Activated naive CD4-positive, alpha-beta T cell treated with anti-CD3 and anti-CD28 coated beads for 36 hours (primary cell): ENCODE measurements at regions of chr19 and their contacts with region 1.

Region 1: GRCh38 chr19:41563854-41564514 is 12.0 kb upstream of the CEACAM21 start:
- DNase-seq: peak; percentile 80
- H3K4me3 Mint-ChIP-seq: peak overlapping the region; percentile 84
- H3K27ac Mint-ChIP-seq: peak overlapping the region; percentile 35
- H3K4me1 Mint-ChIP-seq: peaks cover 76% of the 10 kb centered on the region
- H3K27me3 Mint-ChIP-seq: no peaks in the 10 kb centered on the region

Region 2: GRCh38 chr19:41449079-41449864 is 114.7 kb before region 1 on chr19:
- CTCF ChIA-PET with region 1: interaction called, 185 read pairs
- intact Hi-C with region 1: loop called (anchors 1 kb)
- DNase-seq: peak; percentile 84
- H3K4me3 Mint-ChIP-seq: peak overlapping the region; percentile 77
- H3K27ac Mint-ChIP-seq: peak overlapping the region; percentile 56
- H3K4me1 Mint-ChIP-seq: peaks cover 11% of the 10 kb centered on the region
- H3K27me3 Mint-ChIP-seq: no peaks in the 10 kb centered on the region

Region 3: DNA sequence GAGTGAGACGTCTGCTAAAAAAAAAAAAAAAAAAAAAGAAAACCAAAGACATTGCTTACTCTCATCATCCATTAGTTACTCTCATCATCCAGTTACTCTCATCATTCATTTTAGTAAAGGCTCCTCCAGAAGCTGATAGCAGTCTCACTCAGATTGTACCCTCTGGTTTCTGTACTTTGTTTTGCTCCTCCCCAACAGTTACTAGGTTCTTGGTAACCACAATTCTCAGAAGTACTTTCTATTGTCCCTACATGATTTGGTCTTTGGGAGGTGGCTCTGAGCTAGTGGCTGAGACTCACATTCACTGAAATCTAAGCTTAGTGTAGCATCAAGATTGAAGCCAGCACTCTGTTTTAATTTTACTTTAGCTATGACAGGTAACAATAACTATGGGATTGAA is 106.7 kb before region 1 on chr19:
- CTCF ChIA-PET with region 1: interaction called, 185 read pairs
- intact Hi-C with region 1: no loop called
- DNase-seq: no peak
- H3K4me3 Mint-ChIP-seq: no peak overlapping the region
- H3K27ac Mint-ChIP-seq: no peak overlapping the region
- H3K4me1 Mint-ChIP-seq: peaks cover 15% of the 10 kb centered on the region
- H3K27me3 Mint-ChIP-seq: no peaks in the 10 kb centered on the region

Region 4: DNA sequence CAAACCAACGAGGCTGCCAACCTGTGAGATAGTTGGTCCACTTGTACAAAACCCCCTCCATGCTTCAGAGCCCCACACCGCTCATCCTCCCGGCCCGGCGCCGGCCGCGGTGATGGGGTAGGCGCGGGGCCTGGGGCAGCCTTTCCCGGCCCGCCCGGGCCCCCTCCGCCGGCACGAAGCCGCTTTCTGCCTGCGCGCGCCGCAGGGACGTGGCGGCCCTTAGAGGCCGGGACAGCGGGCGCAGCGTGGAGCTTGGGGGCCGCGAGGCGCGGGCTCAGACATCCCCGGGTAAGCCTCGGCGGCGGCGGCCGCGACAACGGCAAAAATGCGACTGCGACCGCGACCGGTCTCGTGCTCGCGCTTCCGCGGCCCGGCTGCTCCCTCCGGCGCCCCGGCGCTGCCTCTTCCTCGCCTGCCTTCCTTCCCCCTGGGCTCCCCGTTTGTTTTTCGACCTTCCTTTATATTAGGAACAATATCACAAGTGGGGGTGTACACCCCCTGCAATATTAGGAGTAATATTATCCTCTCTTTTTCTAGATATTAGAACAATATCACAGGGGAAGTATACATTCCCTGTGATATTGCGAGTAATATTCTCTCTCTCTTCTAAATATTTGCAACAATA is 41.9 kb before region 1 on chr19:
- CTCF ChIA-PET with region 1: interaction called, 6 read pairs
- intact Hi-C with region 1: loop called (anchors 1 kb)
- DNase-seq: peak; percentile 39
- H3K4me3 Mint-ChIP-seq: peak overlapping the region; percentile 76
- H3K27ac Mint-ChIP-seq: peak overlapping the region; percentile 81
- H3K4me1 Mint-ChIP-seq: peaks cover 24% of the 10 kb centered on the region
- H3K27me3 Mint-ChIP-seq: no peaks in the 10 kb centered on the region

Region 5: GRCh38 chr19:41531438-41532311 is 32.3 kb before region 1 on chr19:
- CTCF ChIA-PET with region 1: interaction called, 171 read pairs
- intact Hi-C with region 1: no loop called
- DNase-seq: peak; percentile 95
- H3K4me3 Mint-ChIP-seq: peak overlapping the region; percentile 78
- H3K27ac Mint-ChIP-seq: peak overlapping the region; percentile 90
- H3K4me1 Mint-ChIP-seq: peaks cover 52% of the 10 kb centered on the region
- H3K27me3 Mint-ChIP-seq: no peaks in the 10 kb centered on the region

Region 6: DNA sequence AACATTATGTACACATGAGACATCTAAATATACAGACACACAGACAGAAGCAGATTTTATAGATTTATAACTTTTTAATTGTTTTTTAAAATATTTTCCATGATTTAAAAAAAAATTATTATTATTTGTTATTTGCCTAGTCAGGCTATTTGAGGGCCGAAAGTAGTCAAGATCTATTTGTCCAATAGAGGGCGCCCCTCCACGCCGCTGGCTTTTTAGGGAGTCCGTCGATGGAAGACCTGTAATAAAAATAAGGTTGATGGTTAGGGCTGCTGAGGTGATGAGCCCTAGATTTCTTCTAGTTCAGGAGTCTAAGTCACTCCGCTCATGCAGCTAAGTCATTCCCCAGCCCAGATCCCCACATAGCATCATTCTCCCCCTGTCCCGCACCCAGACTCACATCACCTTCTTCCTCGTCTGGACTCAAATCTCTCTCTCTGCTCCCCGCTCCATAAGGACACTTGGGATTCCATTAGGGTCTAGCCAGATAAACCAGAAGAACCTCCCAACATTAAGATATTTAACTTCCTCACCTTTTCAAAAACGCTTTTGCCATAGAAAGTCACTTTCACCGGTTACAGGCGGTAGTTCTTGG is 21.9 kb before region 1 on chr19:
- CTCF ChIA-PET with region 1: interaction called, 171 read pairs
- intact Hi-C with region 1: loop called (anchors 1 kb)
- DNase-seq: peak; percentile 93
- H3K4me3 Mint-ChIP-seq: peak overlapping the region; percentile 41
- H3K27ac Mint-ChIP-seq: peak overlapping the region; percentile 82
- H3K4me1 Mint-ChIP-seq: peaks cover 65% of the 10 kb centered on the region
- H3K27me3 Mint-ChIP-seq: no peaks in the 10 kb centered on the region

Region 7: GRCh38 chr19:41548954-41549688 is 14.9 kb before region 1 on chr19:
- CTCF ChIA-PET with region 1: interaction called, 45 read pairs
- intact Hi-C with region 1: loop called (anchors 1 kb)
- DNase-seq: peak; percentile 90
- H3K4me3 Mint-ChIP-seq: peak overlapping the region; percentile 99
- H3K27ac Mint-ChIP-seq: peak overlapping the region; percentile 100
- H3K4me1 Mint-ChIP-seq: peaks cover 57% of the 10 kb centered on the region
- H3K27me3 Mint-ChIP-seq: no peaks in the 10 kb centered on the region